ENCODE measurements at regions of chr18 and their contacts with region 1.

Region 1: DNA sequence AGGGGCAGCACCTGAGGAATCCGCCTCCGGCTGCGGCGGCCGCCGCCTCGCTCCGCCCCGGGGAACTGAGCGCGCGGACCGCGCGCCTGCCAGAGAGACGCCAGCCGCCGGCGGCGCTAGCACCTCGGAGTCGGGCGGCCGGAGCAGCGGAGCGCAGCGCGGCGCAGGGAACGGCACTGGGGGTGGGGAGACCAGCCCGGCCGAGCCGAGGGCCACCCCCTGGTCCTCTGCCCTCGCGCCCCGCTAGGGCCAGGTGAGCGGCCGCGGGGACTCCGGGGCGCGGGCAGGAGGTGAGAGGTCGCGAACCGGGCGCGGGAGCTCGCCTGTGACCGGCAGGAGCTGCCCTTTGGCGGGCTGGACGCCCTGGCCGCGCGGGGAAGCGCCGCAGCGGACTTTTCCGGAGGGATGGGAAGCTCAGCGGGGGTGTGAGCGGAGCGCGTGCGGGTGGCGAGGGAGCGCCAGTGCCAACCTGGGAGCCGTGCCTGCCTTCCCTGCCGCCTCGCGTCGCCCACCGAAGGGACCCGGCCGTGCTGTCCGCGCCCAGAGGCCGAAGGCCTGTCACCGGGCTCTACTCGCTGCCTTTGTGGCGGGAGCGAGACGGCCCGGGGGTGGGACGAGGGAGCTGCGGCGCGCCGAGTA is at the start of gene GREB1L:
- DNase-seq: peak; percentile 50 to 78 (median 70)
- ATAC-seq: peak; percentile 86 to 95 (median 92)
- H3K4me3 ChIP-seq: peak within 1 kb of the TSS; percentile 41 to 82 (median 61)
- H3K27ac ChIP-seq: peak within 1 kb of the TSS; percentile 20 to 86 (median 69)
- H3K4me1 ChIP-seq: peaks cover 0 to 18% (median 0%) of the 10 kb centered on the region in 12 donors
- H3K27me3 ChIP-seq: peaks cover 0 to 66% (median 15%) of the 10 kb centered on the region in 9 donors
- CTCF ChIP-seq: peak in 8 of 12 donors; percentile 24 to 52 (median 38)
- POLR2A ChIP-seq: peak in 1 of 2 donors; percentile 19
- total RNA-seq, gene GREB1L: 7.5 to 21.5 (median 10.6) TPM

Region 2: DNA sequence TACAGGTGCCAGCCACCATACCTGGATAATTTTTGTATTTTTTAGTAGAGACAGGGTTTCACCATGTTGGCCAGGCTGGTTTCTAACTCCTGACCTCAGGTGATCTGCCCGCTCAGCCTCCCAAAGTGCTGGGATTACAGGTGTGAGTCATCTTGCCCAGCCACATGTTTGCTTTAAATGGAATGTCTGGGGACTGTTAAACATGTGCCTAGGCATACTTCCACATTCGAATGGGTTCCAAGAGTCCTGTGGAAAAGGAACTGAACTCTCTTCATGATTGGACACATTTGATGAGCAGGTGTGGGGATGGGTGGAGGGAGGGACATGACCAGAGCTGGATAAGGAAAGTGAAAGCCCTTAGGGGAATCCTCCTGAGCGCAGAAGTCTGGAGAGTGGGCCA is 58.6 kb before region 1 on chr18:
- intact Hi-C with region 1: no loop called
- DNase-seq: no peak
- ATAC-seq: no peak
- H3K4me3 ChIP-seq: no peak overlapping the region
- H3K27ac ChIP-seq: no peak overlapping the region
- H3K4me1 ChIP-seq: no peaks in the 10 kb centered on the region
- H3K27me3 ChIP-seq: no peaks in the 10 kb centered on the region
- CTCF ChIP-seq: no peak
- POLR2A ChIP-seq: no peak

Region 3: GRCh38 chr18:21303913-21304312 is 61.7 kb after region 1 on chr18:
- intact Hi-C with region 1: loop called in 1 of 10 experiments (anchors 5 kb)
- DNase-seq: no peak
- ATAC-seq: no peak
- H3K4me3 ChIP-seq: no peak overlapping the region
- H3K27ac ChIP-seq: no peak overlapping the region
- H3K4me1 ChIP-seq: peaks cover 0 to 9% (median 0%) of the 10 kb centered on the region in 12 donors
- H3K27me3 ChIP-seq: peaks cover 0 to 2% (median 0%) of the 10 kb centered on the region in 9 donors
- CTCF ChIP-seq: no peak
- POLR2A ChIP-seq: no peak

Region 4: GRCh38 chr18:21330122-21330701 is 88.0 kb after region 1 on chr18:
- intact Hi-C with region 1: loop called in 2 of 10 experiments (anchors 5 kb)
- DNase-seq: peak in 4 of 5 donors; percentile 15 to 71 (median 41)
- ATAC-seq: peak; percentile 96 to 99 (median 98)
- H3K4me3 ChIP-seq: no peak overlapping the region
- H3K27ac ChIP-seq: peak overlapping the region; percentile 35 to 85 (median 74)
- H3K4me1 ChIP-seq: peaks cover 0 to 10% (median 0%) of the 10 kb centered on the region in 12 donors
- H3K27me3 ChIP-seq: no peaks in the 10 kb centered on the region
- CTCF ChIP-seq: no peak
- POLR2A ChIP-seq: no peak

Region 5: GRCh38 chr18:21361307-21361880 is 119.1 kb after region 1 on chr18:
- intact Hi-C with region 1: loop called in 1 of 10 experiments (anchors 10 kb)
- DNase-seq: no peak
- ATAC-seq: peak in 1 of 4 donors; percentile 41
- H3K4me3 ChIP-seq: no peak overlapping the region
- H3K27ac ChIP-seq: peak overlapping the region in 1 of 12 donors; percentile 2
- H3K4me1 ChIP-seq: peaks cover 0 to 6% (median 0%) of the 10 kb centered on the region in 12 donors
- H3K27me3 ChIP-seq: no peaks in the 10 kb centered on the region
- CTCF ChIP-seq: no peak
- POLR2A ChIP-seq: no peak

Region 6: DNA sequence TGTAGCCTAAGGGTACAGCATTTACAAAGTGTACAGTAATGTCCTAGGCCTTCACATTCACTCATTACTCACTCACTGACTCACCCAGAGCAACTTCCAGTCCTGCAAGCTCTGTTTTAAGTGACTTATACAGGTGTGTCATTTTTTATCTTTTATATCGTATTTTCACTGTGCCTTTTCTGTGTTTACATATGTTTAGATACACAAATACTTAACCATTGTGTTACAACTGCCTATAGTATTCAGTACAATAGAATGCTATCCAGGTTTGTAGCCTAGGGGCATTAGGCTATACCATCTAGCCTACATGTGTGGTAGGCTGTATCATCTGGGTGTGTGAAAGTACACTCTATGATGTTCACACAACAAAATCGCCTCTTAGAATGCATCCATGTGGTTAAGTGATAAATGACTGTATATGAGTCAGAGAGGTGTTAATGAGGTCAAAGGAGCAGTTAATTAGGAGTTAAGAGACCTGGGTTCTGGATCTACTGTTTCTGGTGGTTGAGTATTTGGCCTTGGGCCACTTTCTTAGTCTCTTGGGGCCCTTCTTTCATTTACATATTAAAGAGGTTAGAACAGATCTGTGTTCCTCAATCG is 148.9 kb after region 1 on chr18:
- intact Hi-C with region 1: loop called in 1 of 10 experiments (anchors 10 kb)
- DNase-seq: no peak
- ATAC-seq: no peak
- H3K4me3 ChIP-seq: no peak overlapping the region
- H3K27ac ChIP-seq: no peak overlapping the region
- H3K4me1 ChIP-seq: peaks cover 0 to 7% (median 0%) of the 10 kb centered on the region in 12 donors
- H3K27me3 ChIP-seq: no peaks in the 10 kb centered on the region
- CTCF ChIP-seq: no peak
- POLR2A ChIP-seq: no peak

Region 7: DNA sequence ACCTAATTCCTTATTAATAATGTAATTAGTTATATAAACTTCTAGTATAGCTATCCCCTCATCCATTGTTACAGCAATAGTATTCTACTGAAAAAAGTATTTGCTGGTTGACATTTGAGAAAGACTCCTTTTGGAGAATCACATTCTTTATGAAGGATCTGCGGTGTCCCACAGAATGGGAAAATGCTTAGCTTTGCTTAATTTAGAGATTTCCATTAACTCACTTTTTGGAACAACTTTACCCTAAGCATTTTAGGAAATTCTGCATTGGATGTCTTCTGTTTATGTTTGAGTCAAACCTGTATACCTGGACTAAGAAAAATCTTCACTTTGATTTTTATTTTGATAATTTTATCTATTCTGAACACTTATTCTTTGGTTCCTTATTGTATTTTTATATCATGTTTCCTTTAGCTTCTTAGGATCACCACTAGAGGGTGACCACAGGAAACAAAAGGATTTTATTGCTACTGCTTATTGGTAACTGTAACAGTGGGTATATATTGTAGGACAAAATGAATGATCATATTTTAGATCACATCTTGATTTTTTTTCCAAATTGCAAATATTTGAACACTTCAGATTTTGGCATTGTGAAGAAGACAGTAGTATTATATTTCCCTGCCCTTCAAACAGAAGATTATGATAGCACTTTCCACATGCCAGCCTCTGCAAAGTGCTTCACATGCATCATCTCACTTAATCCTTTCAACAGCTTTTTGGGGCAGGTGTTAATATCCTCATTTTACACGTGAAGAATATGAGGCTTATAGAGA is 578.0 kb after region 1 on chr18:
- intact Hi-C with region 1: no loop called
- DNase-seq: no peak
- ATAC-seq: peak in 3 of 4 donors; percentile 23 to 49 (median 32)
- H3K4me3 ChIP-seq: no peak overlapping the region
- H3K27ac ChIP-seq: no peak overlapping the region
- H3K4me1 ChIP-seq: peaks cover 0 to 4% (median 0%) of the 10 kb centered on the region in 12 donors
- H3K27me3 ChIP-seq: no peaks in the 10 kb centered on the region
- CTCF ChIP-seq: peak; percentile 38 to 71 (median 58)
- POLR2A ChIP-seq: no peak